Activated CD8-positive, alpha-beta T cell treated with anti-CD3 and anti-CD28 coated beads for 36 hours (primary cell): ENCODE measurements at regions of chr19 and their contacts with region 1.

Region 1: GRCh38 chr19:13033819-13034611 is 38.7 kb downstream of the NFIX start:
- DNase-seq: peak; percentile 77
- ATAC-seq: peak; percentile 88
- H3K4me3 Mint-ChIP-seq: no peak overlapping the region
- H3K27ac Mint-ChIP-seq: no peak overlapping the region
- H3K4me1 Mint-ChIP-seq: peaks cover 10% of the 10 kb centered on the region
- H3K27me3 Mint-ChIP-seq: no peaks in the 10 kb centered on the region
- CTCF ChIP-seq: peak; percentile 75

Region 2: DNA sequence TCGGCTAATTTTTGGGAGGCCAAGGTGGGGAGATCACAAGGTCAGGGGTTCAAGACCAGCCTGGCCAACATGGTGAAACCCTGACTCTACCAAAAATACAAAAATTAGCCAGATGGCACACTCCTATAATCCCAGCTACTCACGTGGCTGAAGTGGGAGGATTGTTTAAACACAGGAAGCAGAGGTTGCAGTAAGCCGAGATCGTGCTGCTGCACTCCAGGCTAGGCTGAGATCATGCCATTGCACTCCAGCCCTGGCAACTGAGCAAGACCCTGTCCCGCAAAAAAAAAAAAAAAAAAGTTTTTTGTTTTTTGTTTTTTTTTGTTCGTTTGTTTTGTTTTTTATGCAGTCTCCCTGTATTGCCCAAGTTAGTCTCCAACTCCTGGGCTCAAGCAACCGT is 174.5 kb before region 1 on chr19:
- CTCF ChIA-PET with region 1: no interaction called
- POLR2A ChIA-PET with region 1: no interaction called
- intact Hi-C with region 1: no loop called
- DNase-seq: no peak
- ATAC-seq: no peak
- H3K4me3 Mint-ChIP-seq: no peak overlapping the region
- H3K27ac Mint-ChIP-seq: no peak overlapping the region
- H3K4me1 Mint-ChIP-seq: no peaks in the 10 kb centered on the region
- H3K27me3 Mint-ChIP-seq: no peaks in the 10 kb centered on the region
- CTCF ChIP-seq: no peak

Region 3: GRCh38 chr19:12913011-12913561 is 120.9 kb before region 1 on chr19:
- CTCF ChIA-PET with region 1: no interaction called
- POLR2A ChIA-PET with region 1: no interaction called
- intact Hi-C with region 1: no loop called
- DNase-seq: no peak
- ATAC-seq: no peak
- H3K4me3 Mint-ChIP-seq: no peak overlapping the region
- H3K27ac Mint-ChIP-seq: peak overlapping the region; percentile 40
- H3K4me1 Mint-ChIP-seq: peaks cover 19% of the 10 kb centered on the region
- H3K27me3 Mint-ChIP-seq: no peaks in the 10 kb centered on the region
- CTCF ChIP-seq: no peak

Region 4: GRCh38 chr19:12956446-12957388 is 77.3 kb before region 1 on chr19 and contains the start of gene GADD45GIP1:
- CTCF ChIA-PET with region 1: no interaction called
- POLR2A ChIA-PET with region 1: no interaction called
- intact Hi-C with region 1: no loop called
- DNase-seq: peak; percentile 87
- ATAC-seq: peak; percentile 96
- H3K4me3 Mint-ChIP-seq: peak within 1 kb of the TSS; percentile 78
- H3K27ac Mint-ChIP-seq: peak within 1 kb of the TSS; percentile 98
- H3K4me1 Mint-ChIP-seq: peaks cover 36% of the 10 kb centered on the region
- H3K27me3 Mint-ChIP-seq: no peaks in the 10 kb centered on the region
- CTCF ChIP-seq: no peak
- total RNA-seq, gene GADD45GIP1: 32.6 to 36.0 TPM

Region 5: DNA sequence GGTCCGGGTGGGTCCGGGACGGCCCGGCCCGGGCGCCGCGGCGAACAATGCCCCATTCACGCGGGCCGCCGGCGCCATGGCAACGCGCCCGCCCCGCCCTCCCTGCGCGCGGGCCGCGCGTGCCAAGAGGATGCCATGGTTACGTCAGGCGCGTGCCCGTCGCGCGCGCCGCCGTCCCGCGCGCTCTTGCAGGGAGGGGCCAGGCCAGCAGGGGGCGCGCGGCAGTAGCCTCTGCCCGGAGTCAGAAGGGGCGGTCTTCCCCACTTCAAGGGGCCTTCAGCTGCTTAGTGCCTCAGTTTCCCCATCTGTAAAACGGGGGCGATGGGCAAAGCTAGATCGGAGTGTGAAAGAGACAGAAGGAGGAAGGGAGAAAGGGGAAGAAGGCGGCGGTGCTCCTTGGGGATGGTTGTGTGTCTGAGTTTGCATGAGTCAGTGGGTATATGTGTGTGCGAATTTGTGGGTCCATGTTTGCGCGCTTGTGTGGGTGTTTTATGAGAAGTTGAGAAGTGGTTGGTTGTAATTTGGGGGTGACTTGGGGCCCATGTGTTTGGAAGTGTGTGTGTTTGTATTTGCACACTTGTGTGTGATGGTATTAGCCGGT is 50.4 kb before region 1 on chr19:
- CTCF ChIA-PET with region 1: interaction called, 154 read pairs
- POLR2A ChIA-PET with region 1: no interaction called
- intact Hi-C with region 1: loop called (anchors 10 kb)
- DNase-seq: peak; percentile 85
- ATAC-seq: peak; percentile 89
- H3K4me3 Mint-ChIP-seq: no peak overlapping the region
- H3K27ac Mint-ChIP-seq: no peak overlapping the region
- H3K4me1 Mint-ChIP-seq: peaks cover 2% of the 10 kb centered on the region
- H3K27me3 Mint-ChIP-seq: peaks cover 4% of the 10 kb centered on the region
- CTCF ChIP-seq: peak; percentile 97

Region 6: GRCh38 chr19:13012690-13013608 is 21.1 kb before region 1 on chr19:
- CTCF ChIA-PET with region 1: interaction called, 19 read pairs
- POLR2A ChIA-PET with region 1: no interaction called
- intact Hi-C with region 1: no loop called
- DNase-seq: peak; percentile 70
- ATAC-seq: peak; percentile 62
- H3K4me3 Mint-ChIP-seq: peak overlapping the region; percentile 77
- H3K27ac Mint-ChIP-seq: peak overlapping the region; percentile 75
- H3K4me1 Mint-ChIP-seq: peaks cover 19% of the 10 kb centered on the region
- H3K27me3 Mint-ChIP-seq: peaks cover 59% of the 10 kb centered on the region
- CTCF ChIP-seq: no peak

Region 7: GRCh38 chr19:13044231-13044836 is 10.3 kb after region 1 on chr19:
- CTCF ChIA-PET with region 1: interaction called, 37 read pairs
- POLR2A ChIA-PET with region 1: no interaction called
- intact Hi-C with region 1: no loop called
- DNase-seq: peak; percentile 78
- ATAC-seq: peak; percentile 90
- H3K4me3 Mint-ChIP-seq: no peak overlapping the region
- H3K27ac Mint-ChIP-seq: peak overlapping the region; percentile 35
- H3K4me1 Mint-ChIP-seq: peaks cover 30% of the 10 kb centered on the region
- H3K27me3 Mint-ChIP-seq: no peaks in the 10 kb centered on the region
- CTCF ChIP-seq: no peak

Region 8: GRCh38 chr19:13093407-13094105 is 59.5 kb after region 1 on chr19:
- CTCF ChIA-PET with region 1: interaction called, 36 read pairs
- POLR2A ChIA-PET with region 1: interaction called, 4 read pairs
- intact Hi-C with region 1: no loop called
- DNase-seq: peak; percentile 91
- ATAC-seq: peak; percentile 84
- H3K4me3 Mint-ChIP-seq: no peak overlapping the region
- H3K27ac Mint-ChIP-seq: no peak overlapping the region
- H3K4me1 Mint-ChIP-seq: peaks cover 24% of the 10 kb centered on the region
- H3K27me3 Mint-ChIP-seq: peaks cover 26% of the 10 kb centered on the region
- CTCF ChIP-seq: peak; percentile 93